MCF 10A (cell line): ENCODE measurements at regions of chr7 and their contacts with region 1.

Region 1: DNA sequence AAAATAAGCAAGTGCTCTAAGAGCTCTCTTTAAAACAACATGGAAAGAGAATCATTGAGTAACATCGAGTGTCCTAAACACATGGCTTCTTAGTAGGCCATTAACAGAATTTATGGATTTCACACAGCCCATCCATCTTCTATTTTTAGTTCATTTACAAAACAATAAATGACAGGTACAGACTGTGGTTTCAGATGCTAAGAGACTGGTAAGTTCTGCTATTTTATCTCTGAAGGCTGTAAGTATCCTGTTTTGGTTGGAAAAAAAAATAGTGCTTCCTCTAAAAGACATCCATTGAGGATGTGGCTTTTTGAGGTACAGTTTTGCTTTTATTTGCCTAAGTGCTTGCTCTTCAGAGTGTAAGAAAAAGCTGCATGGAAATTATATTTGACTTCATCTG is 27.4 kb upstream of the GNAI1 start:
- DNase-seq: no peak
- H3K4me3 Mint-ChIP-seq: no peak overlapping the region
- H3K27ac Mint-ChIP-seq: no peak overlapping the region
- H3K4me1 Mint-ChIP-seq: no peaks in the 10 kb centered on the region
- H3K27me3 Mint-ChIP-seq: no peaks in the 10 kb centered on the region
- CTCF ChIP-seq: no peak

Region 2: DNA sequence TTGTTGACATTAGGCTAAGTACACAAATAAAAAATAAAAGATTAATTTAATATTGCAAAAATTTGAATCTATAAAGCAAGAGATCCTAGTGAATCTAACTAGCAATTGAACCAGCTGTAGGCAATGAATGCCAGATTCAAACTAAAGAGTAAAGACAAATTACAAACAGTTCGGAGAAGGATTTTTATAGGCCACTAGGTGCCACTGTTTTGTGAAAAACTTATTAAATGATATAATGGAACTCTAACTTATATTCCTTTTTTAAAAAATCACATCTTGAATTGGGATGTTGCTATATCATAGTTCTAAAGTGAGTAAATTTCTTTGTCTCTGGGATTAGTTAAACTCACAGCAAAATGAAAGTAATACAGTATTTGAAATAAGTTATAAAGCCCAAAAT is 11.7 kb before region 1 on chr7:
- CTCF ChIA-PET with region 1: interaction called, 17 read pairs
- POLR2A ChIA-PET with region 1: no interaction called
- intact Hi-C with region 1: no loop called
- DNase-seq: peak; percentile 38
- H3K4me3 Mint-ChIP-seq: no peak overlapping the region
- H3K27ac Mint-ChIP-seq: no peak overlapping the region
- H3K4me1 Mint-ChIP-seq: no peaks in the 10 kb centered on the region
- H3K27me3 Mint-ChIP-seq: no peaks in the 10 kb centered on the region
- CTCF ChIP-seq: peak; percentile 37